T-cell (primary cell): ENCODE measurements at regions of chr20 and their contacts with region 1.

Region 1: DNA sequence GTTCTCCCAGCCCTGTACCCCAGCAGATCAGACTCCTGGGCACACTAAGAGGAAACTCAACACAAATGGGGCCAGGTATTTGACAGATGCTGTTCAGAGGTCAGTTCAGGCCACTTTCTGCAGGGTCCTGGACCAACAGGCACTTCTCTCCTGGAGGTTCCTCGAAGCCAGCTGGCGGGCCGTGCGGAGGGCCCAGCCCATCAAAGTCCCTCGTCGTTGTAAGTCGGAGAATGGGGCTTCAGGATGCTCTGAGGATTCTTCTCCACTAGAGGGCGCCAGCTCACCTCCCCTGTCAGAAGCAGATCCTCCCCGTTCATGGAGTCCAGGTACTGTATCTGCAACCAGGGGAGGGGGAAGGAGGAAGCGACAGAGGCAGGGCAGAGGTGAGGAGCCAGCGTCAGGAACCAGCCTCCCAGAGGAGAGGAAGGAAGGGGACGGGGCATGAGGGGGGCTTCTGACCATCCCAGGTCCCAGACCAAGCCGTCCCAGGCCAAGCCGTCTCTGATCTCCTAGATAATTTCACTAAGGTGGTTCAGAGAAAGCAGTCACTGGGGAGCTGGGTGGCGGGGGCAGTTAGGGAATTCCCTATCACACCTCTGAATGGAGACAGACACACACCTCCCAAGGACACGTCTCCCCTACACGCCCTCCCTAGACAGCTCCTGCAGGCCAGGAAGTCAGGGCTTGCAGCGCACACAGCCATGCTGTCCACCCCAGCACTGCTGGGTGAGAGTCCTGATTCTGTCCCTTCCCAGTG is 11.7 kb upstream of the FAM83C start:
- DNase-seq: peak; percentile 63 to 93 (median 78)
- ATAC-seq: peak; percentile 86 to 97 (median 89)
- H3K4me3 ChIP-seq: no peak overlapping the region
- H3K4me3 Mint-ChIP-seq: no peak overlapping the region
- H3K27ac ChIP-seq: no peak overlapping the region
- H3K27ac Mint-ChIP-seq: no peak overlapping the region
- H3K4me1 ChIP-seq: peaks cover 0 to 12% of the 10 kb centered on the region in 2 experiments
- H3K4me1 Mint-ChIP-seq: peaks cover 5 to 12% (median 12%) of the 10 kb centered on the region in 3 donors
- H3K27me3 ChIP-seq: no peaks in the 10 kb centered on the region
- H3K27me3 Mint-ChIP-seq: no peaks in the 10 kb centered on the region

Region 2: DNA sequence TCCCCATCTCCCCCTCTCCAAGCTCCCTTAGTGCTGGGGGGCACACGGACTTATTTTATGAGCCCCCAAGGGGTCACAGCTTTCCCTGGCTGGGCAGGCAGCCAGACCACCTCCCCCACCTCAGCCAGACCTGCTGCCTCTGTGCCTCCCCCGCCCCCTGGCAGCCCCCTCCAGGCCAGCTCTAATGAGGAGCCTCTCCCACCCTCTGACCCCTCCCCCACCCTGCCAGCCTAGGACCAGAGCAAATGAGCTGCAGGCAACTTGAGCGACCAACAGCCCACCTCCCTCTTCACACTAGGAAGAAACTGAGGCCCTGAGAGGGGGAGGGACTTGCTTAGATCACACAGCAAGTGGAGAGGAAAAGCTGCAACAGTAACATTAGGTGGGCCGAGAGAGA is 132.3 kb after region 1 on chr20:
- CTCF ChIA-PET with region 1: interaction called in 1 of 2 experiments, 10 read pairs
- POLR2A ChIA-PET with region 1: no interaction called
- DNase-seq: no peak
- ATAC-seq: no peak
- H3K4me3 ChIP-seq: no peak overlapping the region
- H3K4me3 Mint-ChIP-seq: no peak overlapping the region
- H3K27ac ChIP-seq: no peak overlapping the region
- H3K27ac Mint-ChIP-seq: no peak overlapping the region
- H3K4me1 ChIP-seq: peaks cover 0 to 8% of the 10 kb centered on the region in 2 experiments
- H3K4me1 Mint-ChIP-seq: peaks cover 0 to 16% (median 4%) of the 10 kb centered on the region in 3 donors
- H3K27me3 ChIP-seq: peaks cover 0 to 17% of the 10 kb centered on the region in 2 experiments
- H3K27me3 Mint-ChIP-seq: peaks cover 4 to 7% of the 10 kb centered on the region in 2 donors